ENCODE measurements at regions of chr1 and their contacts with region 1.

Region 1: DNA sequence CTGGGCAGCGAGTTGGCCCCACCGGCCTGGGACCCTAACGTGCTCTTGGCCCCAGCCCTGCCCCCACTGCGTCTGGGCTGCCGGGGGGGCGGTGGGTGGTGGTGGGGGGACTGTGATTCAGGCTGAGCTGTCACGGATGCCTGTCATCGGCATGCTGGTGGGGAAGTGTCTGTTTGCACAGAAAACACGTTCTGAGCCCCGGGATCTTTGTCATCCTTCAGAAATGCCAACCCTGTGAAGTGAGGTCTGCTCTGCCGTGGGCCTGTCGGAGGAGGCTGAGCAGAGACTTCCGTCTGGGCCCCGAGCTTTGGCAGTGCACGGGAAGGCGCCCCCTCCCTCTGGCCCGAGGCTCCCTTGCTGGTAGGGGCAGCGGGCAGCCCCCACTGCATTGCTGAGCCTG is 24.3 kb upstream of the PLCH2 start:
- DNase-seq: peak; percentile 99
- ATAC-seq: peak; percentile 83
- H3K4me3 ChIP-seq: peak overlapping the region; percentile 59
- H3K27ac ChIP-seq: peak overlapping the region; percentile 96
- H3K4me1 ChIP-seq: peaks cover 59% of the 10 kb centered on the region
- H3K27me3 ChIP-seq: no peaks in the 10 kb centered on the region
- CTCF ChIP-seq: no peak

Region 2: DNA sequence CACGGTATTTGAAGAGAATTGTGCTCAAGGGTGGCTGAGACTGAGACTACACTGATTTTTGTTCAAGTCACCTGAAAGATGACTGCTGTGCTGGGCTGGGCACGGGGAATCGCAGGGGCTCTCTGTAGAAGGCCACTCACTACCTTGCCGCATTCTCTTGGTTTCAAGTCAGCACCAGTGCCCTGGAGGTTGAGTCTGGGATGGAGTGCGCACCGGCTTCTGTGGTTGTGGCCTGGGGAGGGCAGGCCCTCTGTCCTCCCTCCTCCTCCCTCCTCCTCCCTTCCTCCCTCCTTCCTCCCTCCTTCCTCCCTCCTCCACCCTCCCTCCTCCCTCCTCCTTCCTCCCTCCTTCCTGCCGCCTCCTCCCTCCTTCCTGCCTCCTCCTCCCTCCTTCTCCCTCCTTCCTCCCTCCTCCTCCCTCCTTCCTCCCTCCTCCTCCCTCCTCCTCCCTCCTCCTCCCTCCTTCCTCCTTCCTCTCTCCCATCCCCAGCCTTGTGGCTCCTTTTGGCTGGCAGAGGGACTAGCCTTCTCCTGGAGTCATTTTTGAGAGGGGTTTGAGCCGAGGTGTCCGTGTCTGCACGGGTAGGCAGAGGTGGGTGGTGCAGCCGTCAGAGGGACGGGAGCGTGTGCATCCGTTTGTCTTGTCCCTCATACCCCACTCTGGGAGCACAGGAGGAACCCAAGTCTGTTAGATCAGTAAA is 50.6 kb before region 1 on chr1:
- CTCF ChIA-PET with region 1: no interaction called
- POLR2A ChIA-PET with region 1: no interaction called
- intact Hi-C with region 1: no loop called
- DNase-seq: no peak
- ATAC-seq: no peak
- H3K4me3 ChIP-seq: no peak overlapping the region
- H3K27ac ChIP-seq: no peak overlapping the region
- H3K4me1 ChIP-seq: no peaks in the 10 kb centered on the region
- H3K27me3 ChIP-seq: no peaks in the 10 kb centered on the region
- CTCF ChIP-seq: no peak

Region 3: GRCh38 chr1:2438038-2438437 is 13.7 kb before region 1 on chr1:
- CTCF ChIA-PET with region 1: no interaction called
- POLR2A ChIA-PET with region 1: no interaction called
- intact Hi-C with region 1: no loop called
- DNase-seq: peak; percentile 28
- ATAC-seq: peak; percentile 56
- H3K4me3 ChIP-seq: no peak overlapping the region
- H3K27ac ChIP-seq: no peak overlapping the region
- H3K4me1 ChIP-seq: no peaks in the 10 kb centered on the region
- H3K27me3 ChIP-seq: peaks cover 19% of the 10 kb centered on the region
- CTCF ChIP-seq: no peak

Region 4: GRCh38 chr1:2545759-2546514 is 94.2 kb after region 1 on chr1:
- CTCF ChIA-PET with region 1: interaction called, 3 read pairs
- POLR2A ChIA-PET with region 1: interaction called, 7 read pairs
- intact Hi-C with region 1: loop called (anchors 2 kb)
- DNase-seq: peak; percentile 95
- ATAC-seq: peak; percentile 64
- H3K4me3 ChIP-seq: peak overlapping the region; percentile 69
- H3K27ac ChIP-seq: peak overlapping the region; percentile 64
- H3K4me1 ChIP-seq: peaks cover 22% of the 10 kb centered on the region
- H3K27me3 ChIP-seq: no peaks in the 10 kb centered on the region
- CTCF ChIP-seq: no peak

Measured in PC-3 (cell line).